Colonic mucosa (tissue), 4 donors: ENCODE measurements at regions of chr11 and their contacts with region 1.

Region 1: GRCh38 chr11:67317205-67317887 is 14.0 kb downstream of the SSH3 start:
- DNase-seq: peak; percentile 99
- H3K4me3 ChIP-seq: peak overlapping the region; percentile 95
- H3K27ac ChIP-seq: peak overlapping the region; percentile 78
- H3K4me1 ChIP-seq: no peaks in the 10 kb centered on the region
- H3K27me3 ChIP-seq: no peaks in the 10 kb centered on the region
- CTCF ChIP-seq: peak; percentile 94

Region 2: GRCh38 chr11:67082035-67082791 is 235.1 kb before region 1 on chr11:
- intact Hi-C with region 1: loop called (anchors 10 kb)
- DNase-seq: peak; percentile 28
- H3K4me3 ChIP-seq: no peak overlapping the region
- H3K27ac ChIP-seq: no peak overlapping the region
- H3K4me1 ChIP-seq: peaks cover 5% of the 10 kb centered on the region
- H3K27me3 ChIP-seq: no peaks in the 10 kb centered on the region
- CTCF ChIP-seq: no peak

Region 3: DNA sequence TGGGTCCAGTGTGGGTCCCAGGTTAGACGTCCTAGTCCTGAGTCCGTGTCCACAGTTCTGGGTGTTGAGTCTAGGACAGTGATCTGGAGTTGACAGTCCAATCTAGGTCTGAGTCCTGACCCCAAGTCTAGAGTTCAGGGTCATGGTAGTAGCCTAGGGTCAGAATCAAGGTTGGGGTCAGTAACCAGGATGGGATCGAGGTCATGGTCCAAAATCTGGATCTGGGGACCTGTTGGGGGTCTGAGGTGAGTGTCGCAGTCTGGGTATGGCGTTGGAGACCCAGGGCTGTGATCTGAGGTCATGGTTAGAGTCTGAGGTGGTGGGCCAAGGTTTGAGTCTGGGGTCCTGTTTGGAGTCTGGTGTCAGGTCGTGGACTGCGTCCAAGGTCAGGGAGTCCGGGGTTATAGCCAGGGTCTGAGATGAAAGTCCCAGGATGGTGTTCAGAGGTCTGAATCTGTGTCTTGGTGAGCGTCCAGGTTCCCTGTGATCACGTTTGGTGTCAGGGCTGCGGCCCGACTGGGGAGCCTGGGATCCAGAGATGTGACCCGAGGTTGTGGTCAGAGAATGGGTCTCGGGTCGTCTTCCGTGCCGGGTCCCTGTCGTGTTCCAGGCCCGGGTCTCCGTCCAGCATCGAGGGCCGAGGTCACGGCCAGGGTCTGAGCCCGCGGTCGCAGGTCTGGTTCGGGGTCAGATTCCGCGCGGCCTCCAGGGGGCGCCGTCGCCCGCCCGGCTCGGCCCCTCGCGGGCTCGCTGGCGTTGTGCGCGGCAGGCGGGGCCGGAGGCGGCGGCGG is 51.5 kb before region 1 on chr11:
- intact Hi-C with region 1: loop called (anchors 2 kb)
- DNase-seq: peak; percentile 83
- H3K4me3 ChIP-seq: no peak overlapping the region
- H3K27ac ChIP-seq: peak overlapping the region; percentile 41
- H3K4me1 ChIP-seq: peaks cover 33% of the 10 kb centered on the region
- H3K27me3 ChIP-seq: no peaks in the 10 kb centered on the region
- CTCF ChIP-seq: peak; percentile 50